ENCODE measurements at regions of chr16 and their contacts with region 1.

Region 1: GRCh38 chr16:11356573-11357331 is 11.5 kb downstream of the RMI2 start:
- DNase-seq: peak in 1 of 2 experiments; percentile 48
- H3K4me3 ChIP-seq: 0 out of 2 replicates have a peak overlapping the region, but pooled peaks have one; percentile 20
- H3K27ac ChIP-seq: peak overlapping the region; percentile 81
- H3K4me1 ChIP-seq: peaks cover 44% of the 10 kb centered on the region
- H3K27me3 ChIP-seq: no peaks in the 10 kb centered on the region
- CTCF ChIP-seq: peak; percentile 49; the same call in 1 of the 2 replicates

Region 2: GRCh38 chr16:11133344-11133943 is 223.3 kb before region 1 on chr16:
- CTCF ChIA-PET with region 1: no interaction called
- POLR2A ChIA-PET with region 1: no interaction called
- intact Hi-C with region 1: loop called (anchors 1 kb)
- DNase-seq: peak; percentile 90 to 96
- H3K4me3 ChIP-seq: peak overlapping the region; percentile 9; the same call in 1 of the 2 replicates
- H3K27ac ChIP-seq: peak overlapping the region; percentile 59
- H3K4me1 ChIP-seq: peaks cover 50% of the 10 kb centered on the region
- H3K27me3 ChIP-seq: no peaks in the 10 kb centered on the region
- CTCF ChIP-seq: no peak

Region 3: DNA sequence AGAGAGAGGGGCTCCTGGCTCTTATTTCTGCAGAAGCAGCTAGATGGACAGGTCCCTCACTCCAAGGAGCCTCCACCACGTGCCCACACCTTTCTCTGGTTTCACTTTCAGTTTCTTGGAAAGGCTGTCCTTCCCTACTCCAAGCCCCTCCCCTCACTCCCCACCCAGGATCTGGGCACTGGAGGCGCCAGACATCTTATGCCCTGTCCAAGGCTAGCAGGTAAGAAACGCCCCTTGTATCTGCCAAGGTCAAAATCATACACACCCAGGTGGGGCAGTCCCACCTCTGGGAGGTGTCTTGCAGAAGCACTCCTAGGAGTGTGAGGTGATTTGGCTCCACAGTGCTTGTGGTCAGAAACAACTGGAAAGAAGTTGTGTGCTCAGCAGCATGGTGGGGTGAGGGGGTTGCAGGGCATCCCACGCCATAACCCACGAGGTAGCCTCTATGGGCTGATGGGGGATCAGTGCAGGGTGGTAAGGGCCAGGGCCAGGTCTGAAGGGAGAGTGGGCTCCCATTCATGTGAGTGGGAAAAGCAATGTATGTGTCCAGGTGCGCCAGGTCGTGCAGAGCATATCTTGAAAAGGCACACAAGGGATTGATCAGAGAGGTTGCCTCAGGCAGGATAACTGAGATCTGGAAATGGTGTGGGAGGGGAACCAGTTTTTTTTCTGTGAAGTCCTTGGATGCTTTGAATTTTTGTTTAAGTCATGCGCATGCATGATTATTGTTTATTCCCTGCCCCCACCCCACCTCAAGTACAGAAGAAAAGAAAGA is 43.8 kb before region 1 on chr16:
- CTCF ChIA-PET with region 1: no interaction called
- POLR2A ChIA-PET with region 1: no interaction called
- intact Hi-C with region 1: loop called (anchors 1 kb)
- DNase-seq: peak; percentile 84 to 90
- H3K4me3 ChIP-seq: peak overlapping the region; percentile 37; the same call in 1 of the 2 replicates
- H3K27ac ChIP-seq: peak overlapping the region; percentile 73
- H3K4me1 ChIP-seq: peaks cover 29% of the 10 kb centered on the region
- H3K27me3 ChIP-seq: no peaks in the 10 kb centered on the region
- CTCF ChIP-seq: no peak

Region 4: DNA sequence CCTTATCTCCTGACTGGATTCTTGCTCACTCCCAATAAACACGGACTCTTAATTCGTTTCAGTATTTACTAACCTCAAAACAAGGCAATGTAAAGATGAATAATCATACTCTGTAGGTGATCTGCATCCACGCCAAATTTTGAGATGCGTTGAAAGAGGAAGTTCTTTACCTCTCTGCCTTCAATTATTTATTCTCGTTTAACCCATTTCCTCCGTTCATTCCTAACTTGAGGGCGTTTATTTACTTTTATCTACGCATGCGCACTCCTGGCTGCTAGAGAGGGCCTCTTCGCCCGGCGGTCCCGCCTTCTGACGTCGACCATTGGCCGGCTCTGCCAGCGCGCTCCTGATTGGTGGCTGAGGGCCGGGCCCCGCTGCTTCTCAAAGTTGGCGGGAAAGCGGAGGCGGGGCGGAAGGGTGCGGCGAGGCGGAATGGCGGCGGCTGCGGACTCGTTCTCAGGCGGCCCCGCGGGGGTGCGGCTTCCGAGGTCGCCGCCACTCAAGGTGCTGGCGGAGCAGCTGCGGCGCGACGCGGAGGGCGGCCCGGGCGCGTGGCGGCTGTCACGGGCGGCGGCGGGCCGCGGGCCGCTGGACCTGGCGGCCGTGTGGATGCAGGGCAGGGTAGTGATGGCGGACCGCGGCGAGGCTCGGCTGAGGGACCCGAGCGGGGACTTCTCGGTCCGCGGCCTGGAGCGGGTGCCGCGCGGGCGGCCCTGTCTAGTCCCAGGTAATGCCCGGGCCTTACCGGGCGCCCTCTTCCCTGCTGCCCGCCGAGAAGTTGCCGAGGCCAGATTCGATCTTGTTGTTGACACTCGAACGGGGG is 11.5 kb before region 1 on chr16 and contains the start of gene RMI2:
- CTCF ChIA-PET with region 1: interaction called, 4 read pairs
- POLR2A ChIA-PET with region 1: no interaction called
- intact Hi-C with region 1: loop called (anchors 1 kb)
- DNase-seq: peak; percentile 91 to 98
- H3K4me3 ChIP-seq: peak within 1 kb of the TSS; percentile 57
- H3K27ac ChIP-seq: no peak within 1 kb of the TSS
- H3K4me1 ChIP-seq: peaks cover 34% of the 10 kb centered on the region
- H3K27me3 ChIP-seq: no peaks in the 10 kb centered on the region
- CTCF ChIP-seq: no peak
- total RNA-seq, gene RMI2: 29.0 and 38.0 TPM in 2 replicates